Transverse colon (tissue), 4 donors: ENCODE measurements at regions of chr4 and their contacts with region 1.

Region 1: GRCh38 chr4:104719539-104720230 is 225.0 kb upstream of the CXXC4 start:
- DNase-seq: no peak
- H3K4me3 ChIP-seq: no peak overlapping the region
- H3K27ac ChIP-seq: no peak overlapping the region
- H3K4me1 ChIP-seq: no peaks in the 10 kb centered on the region
- H3K27me3 ChIP-seq: no peaks in the 10 kb centered on the region
- CTCF ChIP-seq: no peak
- EP300 ChIP-seq: no peak
- POLR2A ChIP-seq: no peak

Region 2: DNA sequence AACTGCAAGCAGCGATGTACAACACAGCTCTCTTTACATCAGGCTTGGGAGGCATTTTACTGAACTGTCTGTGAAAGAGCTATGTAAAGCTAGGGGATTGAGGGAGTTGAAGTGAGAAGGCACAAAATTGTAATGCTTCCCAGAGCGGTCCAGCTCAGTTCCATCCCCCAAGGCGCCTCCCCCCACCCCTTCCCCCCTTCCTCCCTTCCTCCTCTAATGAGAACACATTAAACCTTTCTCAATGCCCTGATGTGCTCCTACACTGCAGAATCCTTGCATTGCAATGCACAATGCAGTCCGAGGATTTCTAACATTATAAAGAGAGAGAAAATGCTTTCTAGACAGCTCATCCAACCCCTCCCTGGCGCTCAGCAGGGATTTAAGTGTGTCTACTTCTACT is 298.9 kb before region 1 on chr4:
- in situ Hi-C with region 1: no loop called
- intact Hi-C with region 1: no loop called
- DNase-seq: no peak
- H3K4me3 ChIP-seq: no peak overlapping the region
- H3K27ac ChIP-seq: no peak overlapping the region
- H3K4me1 ChIP-seq: peaks cover 0 to 26% (median 7%) of the 10 kb centered on the region in 4 donors
- H3K27me3 ChIP-seq: no peaks in the 10 kb centered on the region
- CTCF ChIP-seq: no peak
- EP300 ChIP-seq: no peak
- POLR2A ChIP-seq: no peak

Region 3: DNA sequence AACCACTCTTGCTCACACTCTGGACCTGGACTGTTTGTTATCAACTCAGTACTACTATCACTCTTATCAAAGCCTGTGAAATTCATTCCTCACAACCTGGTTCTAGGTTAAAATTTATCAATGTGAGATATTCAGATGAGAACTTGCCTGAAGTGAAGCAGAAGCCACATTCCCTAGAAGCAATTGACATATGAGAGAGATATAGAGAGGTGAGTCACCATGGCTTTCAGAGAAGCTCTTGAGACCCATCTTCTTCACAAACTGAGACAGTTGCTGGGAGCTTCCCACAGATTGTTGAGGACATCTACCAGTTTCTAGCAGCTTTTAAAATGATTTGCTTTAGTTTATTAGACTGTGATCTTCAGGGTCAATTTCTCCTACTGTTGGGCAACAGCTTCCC is 110.1 kb after region 1 on chr4:
- in situ Hi-C with region 1: no loop called
- intact Hi-C with region 1: loop called (anchors 5 kb)
- DNase-seq: no peak
- H3K4me3 ChIP-seq: no peak overlapping the region
- H3K27ac ChIP-seq: no peak overlapping the region
- H3K4me1 ChIP-seq: no peaks in the 10 kb centered on the region
- H3K27me3 ChIP-seq: no peaks in the 10 kb centered on the region
- CTCF ChIP-seq: no peak
- EP300 ChIP-seq: no peak
- POLR2A ChIP-seq: no peak